ENCODE measurements at regions of chr1 and their contacts with region 1.

Region 1: GRCh38 chr1:162847839-162848453 is 13.0 kb downstream of the CCDC190 start:
- DNase-seq: peak; percentile 67
- CTCF ChIP-seq: peak; percentile 92

Region 2: GRCh38 chr1:162663589-162664106 is 184.3 kb before region 1 on chr1:
- CTCF ChIA-PET with region 1: no interaction called
- POLR2A ChIA-PET with region 1: no interaction called
- DNase-seq: no peak
- CTCF ChIP-seq: no peak

Region 3: DNA sequence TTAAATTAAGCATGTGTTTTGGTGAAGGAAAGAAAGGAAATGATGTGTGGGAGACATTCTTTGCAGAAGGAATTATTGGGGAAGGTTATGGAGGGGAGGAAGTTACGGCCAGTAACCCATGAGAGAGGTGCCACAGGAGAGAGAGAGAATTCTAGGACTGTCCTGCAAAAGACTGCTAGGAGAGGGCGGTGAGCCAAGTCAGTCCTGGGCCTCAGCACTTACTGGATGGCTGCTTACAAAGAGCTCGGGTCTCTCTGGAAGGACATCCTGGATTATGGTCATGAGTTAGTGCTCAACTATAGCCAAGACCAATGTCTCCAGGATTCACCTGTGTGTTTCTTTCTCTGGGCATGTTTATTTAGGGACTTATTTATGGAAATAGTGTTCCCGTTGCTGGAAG is 131.8 kb before region 1 on chr1:
- CTCF ChIA-PET with region 1: no interaction called
- POLR2A ChIA-PET with region 1: no interaction called
- DNase-seq: no peak
- CTCF ChIP-seq: no peak

Region 4: GRCh38 chr1:162835157-162835899 is 12.6 kb before region 1 on chr1:
- CTCF ChIA-PET with region 1: interaction called, 19 read pairs
- POLR2A ChIA-PET with region 1: no interaction called
- DNase-seq: peak; percentile 46
- CTCF ChIP-seq: no peak

Region 5: DNA sequence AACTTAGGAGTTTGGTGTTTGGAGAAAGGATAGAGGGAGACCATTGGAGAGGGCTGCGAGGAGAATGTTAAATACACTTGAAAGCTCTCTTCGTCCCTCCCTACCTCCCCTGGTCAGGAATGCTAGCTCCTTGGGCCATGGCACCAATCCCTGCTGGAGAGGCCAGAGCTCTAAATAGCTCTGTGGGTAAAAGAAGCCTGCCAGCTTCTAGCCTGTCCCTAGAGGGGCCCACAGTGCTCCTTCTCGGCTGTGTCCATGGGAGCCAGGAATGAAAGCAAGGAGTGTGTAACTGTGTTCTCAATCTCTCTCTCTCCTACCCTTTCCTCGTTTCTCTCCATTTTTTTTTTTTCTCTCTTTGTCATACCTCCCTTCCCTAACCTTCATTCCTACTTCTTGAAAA is 13.2 kb after region 1 on chr1 and contains the start of gene CCDC190:
- CTCF ChIA-PET with region 1: interaction called, 46 read pairs
- POLR2A ChIA-PET with region 1: no interaction called
- DNase-seq: no peak
- CTCF ChIP-seq: no peak

Region 6: DNA sequence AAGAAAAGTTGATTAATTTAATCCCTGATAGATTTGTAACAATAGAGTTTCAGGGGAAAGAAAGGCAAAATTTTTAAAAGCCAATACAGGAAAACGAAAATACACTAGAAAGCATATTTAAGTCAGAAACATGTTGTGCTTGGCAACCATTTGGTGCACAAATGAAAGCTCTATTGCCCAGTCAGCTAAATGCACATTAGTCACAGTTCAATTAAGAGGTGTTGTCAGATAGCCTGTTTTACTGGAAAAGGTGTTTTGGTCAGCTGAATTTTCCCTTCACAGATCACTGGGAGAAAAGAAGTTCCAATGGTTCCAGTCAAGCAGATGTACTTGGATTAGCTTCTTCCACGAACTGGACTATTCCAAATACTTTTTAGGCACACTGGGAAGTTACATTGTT is 246.6 kb after region 1 on chr1:
- CTCF ChIA-PET with region 1: no interaction called
- POLR2A ChIA-PET with region 1: no interaction called
- DNase-seq: no peak
- CTCF ChIP-seq: no peak